ENCODE measurements at regions of chr5 and their contacts with region 1.

Region 1: GRCh38 chr5:179907570-179908324 is at the start of gene TBC1D9B:
- DNase-seq: peak; percentile 67
- H3K4me3 Mint-ChIP-seq: peak within 1 kb of the TSS; percentile 92
- H3K27ac Mint-ChIP-seq: peak within 1 kb of the TSS; percentile 88
- H3K4me1 Mint-ChIP-seq: peaks cover 10% of the 10 kb centered on the region
- H3K27me3 Mint-ChIP-seq: no peaks in the 10 kb centered on the region
- total RNA-seq, gene TBC1D9B: 124 and 125 TPM in 2 replicates

Region 2: GRCh38 chr5:179678223-179679013 is 229.3 kb before region 1 on chr5:
- intact Hi-C with region 1: loop called (anchors 10 kb)
- DNase-seq: peak; percentile 93
- H3K4me3 Mint-ChIP-seq: peak overlapping the region; percentile 96
- H3K27ac Mint-ChIP-seq: peak overlapping the region; percentile 96
- H3K4me1 Mint-ChIP-seq: peaks cover 27% of the 10 kb centered on the region
- H3K27me3 Mint-ChIP-seq: no peaks in the 10 kb centered on the region

Region 3: DNA sequence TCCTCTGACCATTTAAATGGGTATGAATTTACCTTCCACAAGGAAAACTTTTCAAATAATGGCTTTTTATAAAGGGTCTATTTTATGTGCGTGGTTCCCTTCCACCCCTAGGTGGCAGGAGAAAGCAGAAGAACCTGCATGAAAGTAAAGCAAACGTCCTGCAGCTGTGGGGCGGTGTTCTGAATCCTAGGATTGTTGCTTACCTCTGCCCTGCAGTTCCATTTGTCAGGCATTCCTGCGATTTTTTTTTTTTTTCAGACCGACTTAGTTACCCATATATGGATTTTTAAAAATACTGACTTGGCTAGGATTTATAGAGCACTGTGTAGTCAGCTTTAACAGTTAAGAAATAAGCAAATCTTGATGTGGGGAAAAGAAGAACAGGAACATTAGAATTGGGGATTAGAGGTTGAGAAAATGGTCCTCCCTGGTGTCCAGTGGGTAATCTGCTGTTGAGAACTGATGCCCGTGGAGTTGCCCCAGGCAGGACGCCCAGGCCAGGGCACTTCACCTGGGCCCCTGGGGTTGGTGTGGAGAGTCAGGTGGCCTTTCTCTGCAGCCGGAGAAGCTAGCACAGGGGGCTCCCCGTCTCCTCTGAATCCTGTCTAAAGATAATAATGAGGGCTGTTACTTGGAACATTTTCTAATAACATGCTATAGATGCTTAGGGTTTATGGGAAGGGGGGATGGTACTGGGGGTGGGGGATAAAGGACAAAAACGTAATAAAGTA is 144.4 kb before region 1 on chr5:
- intact Hi-C with region 1: loop called (anchors 2 kb)
- DNase-seq: peak; percentile 21
- H3K4me3 Mint-ChIP-seq: no peak overlapping the region
- H3K27ac Mint-ChIP-seq: peak overlapping the region; percentile 56
- H3K4me1 Mint-ChIP-seq: peaks cover 46% of the 10 kb centered on the region
- H3K27me3 Mint-ChIP-seq: no peaks in the 10 kb centered on the region

Region 4: GRCh38 chr5:179821581-179822432 is 85.9 kb before region 1 on chr5:
- intact Hi-C with region 1: no loop called
- DNase-seq: peak; percentile 83
- H3K4me3 Mint-ChIP-seq: peak overlapping the region; percentile 91
- H3K27ac Mint-ChIP-seq: peak overlapping the region; percentile 93
- H3K4me1 Mint-ChIP-seq: peaks cover 31% of the 10 kb centered on the region
- H3K27me3 Mint-ChIP-seq: no peaks in the 10 kb centered on the region

Region 5: DNA sequence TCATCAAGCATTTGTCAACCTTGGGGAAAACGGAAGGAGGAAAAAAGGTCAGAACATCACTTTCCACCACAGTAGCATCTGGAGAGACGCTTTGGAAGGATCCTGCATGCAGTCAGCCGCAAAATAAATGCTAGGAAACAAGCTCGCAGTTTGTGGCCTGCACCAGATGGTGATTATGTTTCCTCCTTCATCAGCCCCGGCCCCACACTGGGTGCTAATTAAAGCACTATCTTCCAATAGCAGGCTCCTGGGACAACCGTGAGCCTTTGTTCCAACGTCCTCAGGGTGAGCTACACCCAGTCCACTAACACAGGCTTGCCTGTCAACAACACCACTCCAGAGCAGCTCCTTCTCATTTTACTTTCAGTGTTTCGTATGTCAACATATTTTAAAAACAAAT is 99.8 kb after region 1 on chr5:
- intact Hi-C with region 1: no loop called
- DNase-seq: no peak
- H3K4me3 Mint-ChIP-seq: no peak overlapping the region
- H3K27ac Mint-ChIP-seq: no peak overlapping the region
- H3K4me1 Mint-ChIP-seq: peaks cover 32% of the 10 kb centered on the region
- H3K27me3 Mint-ChIP-seq: no peaks in the 10 kb centered on the region

Region 6: DNA sequence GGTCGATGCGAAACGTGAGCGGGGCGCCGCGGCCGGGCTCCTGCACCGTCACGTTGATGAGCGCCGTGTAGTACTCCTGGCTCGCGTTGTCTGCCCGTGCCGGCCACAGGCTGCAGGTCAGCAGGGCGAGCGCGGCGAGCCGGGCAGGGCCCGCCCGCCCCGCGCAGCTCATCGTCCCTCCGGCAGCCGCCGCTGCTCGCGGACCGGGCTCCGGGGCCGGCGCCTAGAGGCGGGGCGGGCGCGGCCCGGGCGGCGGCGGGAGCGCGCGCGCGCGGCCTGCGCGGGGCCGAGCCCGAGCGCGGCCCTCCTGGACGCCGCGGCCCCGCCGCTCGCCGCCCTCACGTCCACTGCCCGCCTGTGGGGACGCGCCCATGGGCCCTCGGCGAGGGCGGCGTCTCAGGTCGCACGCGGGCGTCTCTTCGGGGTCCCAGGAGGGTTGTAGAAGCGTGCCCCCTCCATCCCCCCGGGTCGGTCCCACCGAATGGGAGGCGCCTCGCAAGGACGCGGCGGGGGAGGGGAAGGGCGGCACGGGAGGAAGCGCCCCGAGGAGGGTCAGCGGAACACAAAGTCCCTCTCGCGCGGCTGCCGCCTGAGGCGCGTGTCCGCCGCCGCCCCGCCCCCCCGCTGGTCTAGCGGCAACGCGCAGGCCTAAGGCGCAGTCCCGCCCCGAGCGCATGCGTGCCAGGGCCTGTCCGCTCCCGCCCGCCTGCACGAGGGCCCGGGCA is 163.9 kb after region 1 on chr5 and contains the start of gene RNF130:
- intact Hi-C with region 1: loop called (anchors 10 kb)
- DNase-seq: peak; percentile 78
- H3K4me3 Mint-ChIP-seq: peak within 1 kb of the TSS; percentile 80
- H3K27ac Mint-ChIP-seq: no peak within 1 kb of the TSS
- H3K4me1 Mint-ChIP-seq: peaks cover 13% of the 10 kb centered on the region
- H3K27me3 Mint-ChIP-seq: peaks cover 55% of the 10 kb centered on the region
- total RNA-seq, gene RNF130: 10.0 and 10.3 TPM in 2 replicates

Region 7: GRCh38 chr5:180090098-180090768 is 182.5 kb after region 1 on chr5:
- intact Hi-C with region 1: loop called (anchors 5 kb)
- DNase-seq: peak; percentile 64
- H3K4me3 Mint-ChIP-seq: peak overlapping the region; percentile 78
- H3K27ac Mint-ChIP-seq: peak overlapping the region; percentile 28
- H3K4me1 Mint-ChIP-seq: peaks cover 14% of the 10 kb centered on the region
- H3K27me3 Mint-ChIP-seq: peaks cover 5% of the 10 kb centered on the region

Measured in activated T-helper 2 cell treated with anti-CD3 and anti-CD28 coated beads, Interferon-gamma antibody, Interleukin-2, Interleukin-4, amounts not matched to agents 10 μg/mL and 5 μg/mL and 100 μg/mL, durations not matched to agents 14 hours and 24 hours and 36 hours (primary cell).